GM23248 (cell line): ENCODE measurements at regions of chr17 and their contacts with region 1.

Region 1: GRCh38 chr17:78421484-78422266 is 43.2 kb downstream of the PGS1 start:
- DNase-seq: peak; percentile 78
- H3K4me3 ChIP-seq: no peak overlapping the region
- H3K27ac ChIP-seq: no peak overlapping the region
- H3K4me1 ChIP-seq: no peaks in the 10 kb centered on the region
- H3K27me3 ChIP-seq: no peaks in the 10 kb centered on the region

Region 2: GRCh38 chr17:78289802-78290363 is 131.8 kb before region 1 on chr17:
- in situ Hi-C with region 1: loop called (anchors 10 kb)
- DNase-seq: peak; percentile 91
- H3K4me3 ChIP-seq: no peak overlapping the region
- H3K27ac ChIP-seq: no peak overlapping the region
- H3K4me1 ChIP-seq: no peaks in the 10 kb centered on the region
- H3K27me3 ChIP-seq: no peaks in the 10 kb centered on the region

Region 3: GRCh38 chr17:78359997-78360370 is 61.7 kb before region 1 on chr17 and contains the start of gene SOCS3:
- in situ Hi-C with region 1: loop called (anchors 5 kb)
- DNase-seq: peak; percentile 99
- H3K4me3 ChIP-seq: peak within 1 kb of the TSS; percentile 88
- H3K27ac ChIP-seq: peak within 1 kb of the TSS; percentile 86
- H3K4me1 ChIP-seq: peaks cover 28% of the 10 kb centered on the region
- H3K27me3 ChIP-seq: no peaks in the 10 kb centered on the region
- total RNA-seq, gene SOCS3: 47.8 and 50.6 TPM in 2 replicates